Mammary epithelial cell (primary cell): ENCODE measurements at regions of chr21 and their contacts with region 1.

Region 1: DNA sequence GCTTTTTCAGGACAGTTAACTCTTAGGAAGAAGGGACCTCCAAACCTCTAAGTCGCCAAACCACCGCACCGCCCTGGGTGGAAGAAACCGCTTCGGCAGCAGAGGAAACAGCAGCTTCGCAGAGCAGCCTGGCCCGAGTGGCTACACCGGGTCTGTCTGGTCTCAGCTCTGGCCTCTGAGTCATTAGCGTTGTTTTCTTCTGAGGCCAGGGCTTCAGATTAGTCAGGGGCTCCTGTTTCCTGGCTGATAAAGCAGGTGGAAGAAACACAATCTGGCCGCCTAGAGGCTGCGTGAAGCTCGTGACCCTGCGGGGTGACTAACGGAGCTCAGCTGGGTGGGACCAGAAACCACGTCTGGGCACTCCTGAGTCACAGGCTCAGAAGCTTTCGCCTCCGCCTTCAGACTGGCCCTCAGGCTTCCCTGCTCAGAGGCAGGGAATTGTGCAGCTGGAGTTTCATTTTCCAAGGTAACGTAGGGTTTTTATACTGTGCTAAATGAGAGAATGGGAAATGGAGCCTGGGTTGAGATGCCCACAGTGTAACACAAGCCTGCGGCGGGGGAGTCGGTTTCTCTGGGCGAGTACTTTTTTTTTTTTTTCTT is 44.9 kb downstream of the CHAF1B start:
- DNase-seq: peak; percentile 100
- H3K4me3 ChIP-seq: peak overlapping the region in 2 of 3 experiments; percentile 10 to 27
- H3K27ac ChIP-seq: peak overlapping the region; percentile 83
- H3K4me1 ChIP-seq: peaks cover 35% of the 10 kb centered on the region
- H3K27me3 ChIP-seq: no peaks in the 10 kb centered on the region
- CTCF ChIP-seq: peak in 1 of 2 donors; percentile 22

Region 2: GRCh38 chr21:36461606-36462486 is 31.8 kb after region 1 on chr21:
- CTCF ChIA-PET with region 1: no interaction called
- dilution Hi-C with region 1: no loop called
- in situ Hi-C with region 1: no loop called
- intact Hi-C with region 1: loop called (anchors 1 kb)
- DNase-seq: peak; percentile 72
- H3K4me3 ChIP-seq: no peak overlapping the region
- H3K27ac ChIP-seq: no peak overlapping the region
- H3K4me1 ChIP-seq: peaks cover 12% of the 10 kb centered on the region
- H3K27me3 ChIP-seq: no peaks in the 10 kb centered on the region
- CTCF ChIP-seq: peak in 1 of 2 donors; percentile 2

Region 3: GRCh38 chr21:36478207-36478701 is 48.2 kb after region 1 on chr21:
- CTCF ChIA-PET with region 1: interaction called, 3 read pairs
- dilution Hi-C with region 1: no loop called
- in situ Hi-C with region 1: no loop called
- intact Hi-C with region 1: loop called (anchors 5 kb)
- DNase-seq: peak; percentile 83
- H3K4me3 ChIP-seq: no peak overlapping the region
- H3K27ac ChIP-seq: no peak overlapping the region
- H3K4me1 ChIP-seq: peaks cover 11% of the 10 kb centered on the region
- H3K27me3 ChIP-seq: no peaks in the 10 kb centered on the region
- CTCF ChIP-seq: no peak

Region 4: DNA sequence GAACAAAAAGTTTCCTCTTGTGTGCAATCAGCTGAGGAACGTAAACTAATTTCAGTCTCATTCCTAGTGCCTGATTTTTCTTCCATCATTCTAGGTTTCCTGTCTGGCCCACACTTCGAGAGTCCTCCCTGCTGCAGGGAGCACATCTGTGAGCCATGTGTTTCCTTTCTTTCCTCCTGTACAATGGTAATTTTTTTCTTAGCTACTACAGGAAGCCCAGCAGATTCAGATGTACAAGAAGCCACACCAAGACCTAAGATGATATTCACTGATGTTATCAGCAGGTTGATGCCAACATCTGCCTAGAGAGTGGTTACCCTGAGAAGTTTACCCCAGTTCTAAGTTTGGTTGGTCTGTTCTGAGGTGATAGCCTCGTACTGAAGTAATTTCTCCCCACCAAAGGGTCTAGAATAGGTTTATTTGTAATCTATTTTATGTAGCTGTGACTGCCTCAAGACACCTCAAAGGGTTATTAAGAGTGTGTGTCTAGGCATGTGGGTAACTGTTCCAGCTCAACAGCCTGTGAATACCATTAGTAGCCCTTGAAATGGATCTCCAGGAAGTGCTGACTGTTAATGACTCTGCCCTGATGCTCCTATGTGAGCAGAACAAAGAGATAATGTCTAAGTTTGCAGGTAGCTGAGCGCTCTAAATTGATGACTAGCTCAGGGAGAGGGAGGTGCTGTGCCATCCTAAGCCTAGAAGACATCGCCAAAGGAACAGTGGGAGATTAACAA is 81.6 kb after region 1 on chr21:
- CTCF ChIA-PET with region 1: no interaction called
- dilution Hi-C with region 1: no loop called
- in situ Hi-C with region 1: no loop called
- intact Hi-C with region 1: no loop called
- DNase-seq: no peak
- H3K4me3 ChIP-seq: no peak overlapping the region
- H3K27ac ChIP-seq: no peak overlapping the region
- H3K4me1 ChIP-seq: peaks cover 7% of the 10 kb centered on the region
- H3K27me3 ChIP-seq: no peaks in the 10 kb centered on the region
- CTCF ChIP-seq: no peak